H1 (cell line): ENCODE measurements at regions of chr11 and their contacts with region 1.

Region 1: DNA sequence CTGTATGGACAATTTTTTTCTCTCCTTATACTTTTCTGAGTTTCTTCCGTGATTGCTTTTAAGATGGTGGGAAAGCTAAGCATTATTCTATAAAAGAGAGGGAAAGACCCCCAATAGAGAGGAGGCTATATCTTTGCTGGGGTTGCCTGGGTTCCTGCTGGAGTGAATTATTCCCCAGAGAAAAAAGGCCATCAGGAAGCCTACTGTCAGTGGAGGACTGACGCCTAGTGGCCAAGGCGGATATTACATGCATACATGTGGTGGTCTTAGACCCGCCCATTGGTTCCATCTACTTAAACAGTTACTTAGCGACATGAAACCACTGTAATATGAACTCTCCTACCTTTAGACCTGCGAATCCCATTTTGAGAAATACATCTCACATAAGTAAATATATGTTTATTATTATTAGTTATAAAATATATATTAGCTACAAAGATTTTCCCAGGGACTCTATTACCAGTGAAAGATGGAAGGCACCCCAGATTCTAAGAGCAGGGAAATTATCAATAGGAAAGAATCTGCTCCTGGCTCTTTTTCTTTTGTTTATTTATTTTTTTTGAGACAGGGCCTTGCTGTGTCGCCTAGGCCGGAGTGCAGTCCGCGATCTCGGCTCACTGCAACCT is 15.7 kb upstream of the PGA3 start:
- DNase-seq: peak; percentile 58 to 90
- H3K4me3 ChIP-seq: no peak overlapping the region
- H3K27ac ChIP-seq: no peak overlapping the region
- H3K4me1 ChIP-seq: no peaks in the 10 kb centered on the region
- H3K27me3 ChIP-seq: no peaks in the 10 kb centered on the region
- CTCF ChIP-seq: peak; percentile 80 to 93 (median 89)
- EP300 ChIP-seq: no peak
- POLR2A ChIP-seq: no peak
- RAD21 ChIP-seq: peak; percentile 96 to 97

Region 2: GRCh38 chr11:61041755-61042518 is 145.7 kb before region 1 on chr11:
- CTCF ChIA-PET with region 1: interaction called, 13 read pairs
- POLR2A ChIA-PET with region 1: no interaction called
- DNase-seq: peak in 1 of 2 experiments; percentile 21
- H3K4me3 ChIP-seq: no peak overlapping the region
- H3K27ac ChIP-seq: no peak overlapping the region
- H3K4me1 ChIP-seq: peaks cover 2 to 10% (median 3%) of the 10 kb centered on the region in 4 experiments; a peak in 6 of 7 replicates
- H3K27me3 ChIP-seq: no peaks in the 10 kb centered on the region; a peak in 1 of 7 replicates
- CTCF ChIP-seq: no peak
- EP300 ChIP-seq: no peak
- POLR2A ChIP-seq: no peak
- RAD21 ChIP-seq: no peak

Region 3: GRCh38 chr11:61141601-61142028 is 46.0 kb before region 1 on chr11:
- CTCF ChIA-PET with region 1: interaction called, 17 read pairs
- POLR2A ChIA-PET with region 1: no interaction called
- DNase-seq: no peak
- H3K4me3 ChIP-seq: no peak overlapping the region
- H3K27ac ChIP-seq: no peak overlapping the region
- H3K4me1 ChIP-seq: peaks cover 0 to 1% (median 0%) of the 10 kb centered on the region in 4 experiments; a peak in 3 of 7 replicates
- H3K27me3 ChIP-seq: no peaks in the 10 kb centered on the region
- CTCF ChIP-seq: peak in 2 of 3 experiments; percentile 9 to 17; a peak in 2 of 4 replicates
- EP300 ChIP-seq: no peak
- POLR2A ChIP-seq: no peak
- RAD21 ChIP-seq: no peak

Region 4: DNA sequence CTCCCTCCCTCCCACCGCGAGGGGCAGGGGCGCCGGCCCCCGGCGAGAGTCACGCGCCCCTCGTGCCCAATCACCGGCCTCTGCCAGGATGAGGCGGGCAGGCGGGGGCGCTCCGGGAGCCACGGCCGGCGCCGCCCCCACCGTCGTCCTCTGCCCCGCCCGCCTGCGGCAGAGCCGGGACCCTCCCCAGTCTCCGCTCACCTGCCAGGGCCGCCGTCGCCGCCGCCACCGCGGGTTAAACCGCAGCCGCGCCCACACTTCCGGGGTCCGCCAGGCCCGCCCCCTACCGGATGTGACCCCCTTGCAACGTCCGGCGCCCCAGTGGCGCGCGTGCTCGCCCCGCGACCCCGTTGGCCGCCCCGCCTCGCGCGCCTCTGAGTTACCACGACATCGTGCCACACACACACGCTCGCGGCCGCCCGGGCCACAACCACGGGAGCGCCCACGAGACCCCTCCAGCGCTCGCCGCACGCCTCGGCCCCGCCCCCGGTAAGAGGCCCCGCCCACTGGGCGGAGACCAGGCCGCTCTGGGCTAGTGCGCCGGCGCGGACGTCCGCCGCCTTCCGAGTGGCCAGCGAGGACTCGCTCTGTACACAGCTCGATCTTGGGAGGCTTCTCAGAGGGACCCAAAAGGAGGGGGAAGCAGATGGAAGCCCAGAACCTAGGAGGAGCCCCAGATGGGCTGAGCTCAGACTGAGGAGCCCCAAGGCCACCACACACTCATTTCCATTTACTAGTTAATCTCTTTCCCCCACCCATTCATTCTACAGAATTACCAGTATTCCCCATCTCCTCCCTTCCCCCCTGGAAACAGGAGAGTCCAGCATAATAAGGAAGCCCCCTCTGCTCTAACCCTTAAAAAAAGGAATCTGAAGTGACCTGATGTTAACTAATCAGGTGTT is 26.2 kb before region 1 on chr11 and contains the start of gene VPS37C:
- CTCF ChIA-PET with region 1: interaction called, 14 read pairs
- POLR2A ChIA-PET with region 1: no interaction called
- DNase-seq: peak; percentile 44 to 96
- H3K4me3 ChIP-seq: peak within 1 kb of the TSS; percentile 70 to 83 (median 77)
- H3K27ac ChIP-seq: peak within 1 kb of the TSS; percentile 88
- H3K4me1 ChIP-seq: peaks cover 0 to 7% (median 2%) of the 10 kb centered on the region in 4 experiments; a peak in 3 of 7 replicates
- H3K27me3 ChIP-seq: no peaks in the 10 kb centered on the region
- CTCF ChIP-seq: no peak
- EP300 ChIP-seq: no peak
- POLR2A ChIP-seq: peak; percentile 57 to 78
- RAD21 ChIP-seq: no peak
- total RNA-seq, gene VPS37C: 18.0 and 21.0 TPM in 2 replicates